Mammary epithelial cell (primary cell): ENCODE measurements at regions of chr4 and their contacts with region 1.

Region 1: DNA sequence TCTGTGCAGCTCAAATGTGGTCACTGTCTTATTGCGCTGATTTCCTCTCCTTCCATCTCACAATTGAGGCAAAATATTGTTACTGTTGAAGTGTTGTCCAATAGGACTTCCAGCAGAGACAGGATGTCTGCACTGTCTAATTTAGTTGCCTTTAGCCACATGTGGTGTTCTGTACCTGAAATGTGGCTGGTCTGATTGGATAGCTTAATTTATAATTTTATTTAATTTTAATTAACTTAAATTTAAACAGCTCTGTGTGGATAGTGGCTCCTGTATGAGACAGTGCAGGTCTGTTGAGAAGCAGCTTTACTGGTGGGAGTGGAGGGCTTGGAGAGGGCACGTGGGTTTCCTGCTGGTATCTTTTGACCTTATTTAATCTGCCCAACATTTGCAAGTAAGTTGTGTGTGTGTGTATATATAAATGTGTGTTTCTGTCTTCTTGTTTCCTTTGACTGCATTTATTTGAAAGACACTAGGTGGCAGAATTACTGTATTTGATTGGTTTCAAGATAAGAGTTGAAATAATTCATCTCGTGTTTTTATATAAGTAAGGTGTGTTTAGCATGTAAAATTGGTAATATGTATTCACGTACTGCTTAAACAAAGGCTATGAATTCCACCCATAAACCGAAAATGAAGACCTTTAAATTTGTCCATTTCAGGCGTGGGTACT is 55.3 kb upstream of the MSANTD1 start:
- DNase-seq: no peak
- H3K4me3 ChIP-seq: no peak overlapping the region
- H3K27ac ChIP-seq: no peak overlapping the region
- H3K4me1 ChIP-seq: peaks cover 7% of the 10 kb centered on the region
- H3K27me3 ChIP-seq: no peaks in the 10 kb centered on the region
- CTCF ChIP-seq: peak; percentile 25 to 43

Region 2: DNA sequence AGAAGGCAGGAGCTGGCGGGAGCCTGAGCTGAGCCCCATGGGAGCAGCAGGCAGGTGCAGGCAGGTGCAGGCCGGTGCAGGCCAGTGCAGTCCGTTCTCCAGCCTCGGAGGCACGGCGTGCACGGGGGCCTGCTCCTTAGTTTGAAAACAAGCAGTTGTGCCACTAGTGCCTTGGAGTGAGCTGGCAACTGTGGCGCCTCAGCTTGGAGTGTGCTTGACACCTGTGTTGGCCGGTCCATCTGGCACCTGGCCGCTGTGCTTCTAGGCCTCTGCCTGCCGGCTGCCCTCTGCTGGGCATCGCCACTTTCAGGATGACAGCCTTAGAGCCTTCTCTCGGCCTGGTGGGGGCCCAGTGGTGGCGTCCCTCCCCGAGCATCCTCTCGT is 147.0 kb after region 1 on chr4:
- CTCF ChIA-PET with region 1: no interaction called
- dilution Hi-C with region 1: no loop called
- in situ Hi-C with region 1: no loop called
- intact Hi-C with region 1: loop called (anchors 2 kb)
- DNase-seq: peak; percentile 7
- H3K4me3 ChIP-seq: no peak overlapping the region
- H3K27ac ChIP-seq: no peak overlapping the region
- H3K4me1 ChIP-seq: no peaks in the 10 kb centered on the region
- H3K27me3 ChIP-seq: no peaks in the 10 kb centered on the region
- CTCF ChIP-seq: peak in 1 of 2 donors; percentile 64

Region 3: GRCh38 chr4:4225915-4226605 is 1032.4 kb after region 1 on chr4:
- CTCF ChIA-PET with region 1: no interaction called
- dilution Hi-C with region 1: no loop called
- in situ Hi-C with region 1: no loop called
- intact Hi-C with region 1: no loop called
- DNase-seq: no peak
- H3K4me3 ChIP-seq: no peak overlapping the region
- H3K27ac ChIP-seq: no peak overlapping the region
- H3K4me1 ChIP-seq: no peaks in the 10 kb centered on the region
- H3K27me3 ChIP-seq: peaks cover 35% of the 10 kb centered on the region
- CTCF ChIP-seq: no peak